ENCODE measurements at regions of chr10 and their contacts with region 1.

Region 1: GRCh38 chr10:95864906-95865813 is 42.6 kb upstream of the CC2D2B start:
- DNase-seq: peak; percentile 33
- H3K4me3 ChIP-seq: no peak overlapping the region
- CTCF ChIP-seq: peak; percentile 71

Region 2: GRCh38 chr10:95755511-95756004 is 109.6 kb before region 1 on chr10:
- CTCF ChIA-PET with region 1: interaction called, 13 read pairs
- POLR2A ChIA-PET with region 1: no interaction called
- DNase-seq: no peak
- H3K4me3 ChIP-seq: no peak overlapping the region
- CTCF ChIP-seq: no peak

Region 3: GRCh38 chr10:95783741-95784140 is 81.4 kb before region 1 on chr10:
- CTCF ChIA-PET with region 1: no interaction called
- POLR2A ChIA-PET with region 1: no interaction called
- DNase-seq: no peak
- H3K4me3 ChIP-seq: no peak overlapping the region
- CTCF ChIP-seq: no peak

Region 4: DNA sequence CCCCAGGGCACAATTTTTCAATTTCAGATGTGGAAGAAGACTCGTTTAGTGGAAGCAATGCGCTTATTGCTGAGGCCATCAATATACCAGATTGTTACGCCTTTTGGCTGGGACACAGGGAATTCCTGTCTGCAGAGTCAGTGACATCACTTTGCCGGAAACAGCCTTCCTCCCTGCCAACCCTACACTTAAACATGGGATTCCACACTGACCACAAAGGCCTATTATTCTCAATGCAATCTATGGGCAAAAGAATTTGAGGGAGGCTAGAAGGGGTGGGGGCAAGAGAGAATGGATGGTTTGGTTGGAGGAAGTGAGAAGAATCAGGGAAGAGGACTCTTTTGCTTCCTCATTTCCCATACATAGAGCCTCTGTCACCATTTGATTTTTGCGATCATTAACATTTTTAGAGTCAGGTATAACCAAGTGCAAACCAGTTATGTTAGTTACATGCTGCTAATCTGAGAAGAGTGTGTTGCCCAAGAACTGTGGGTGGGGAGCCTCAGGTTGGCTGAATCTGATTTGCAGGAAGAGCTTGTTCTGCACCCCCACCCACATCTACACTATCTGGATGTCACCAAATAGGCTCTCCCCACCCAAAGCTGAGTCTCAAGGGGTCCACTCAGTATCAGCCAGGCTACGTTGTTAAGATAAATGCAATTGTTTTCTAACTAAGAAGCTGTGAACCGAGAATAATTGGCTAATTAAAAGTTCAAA is 51.0 kb before region 1 on chr10:
- CTCF ChIA-PET with region 1: no interaction called
- POLR2A ChIA-PET with region 1: no interaction called
- DNase-seq: peak; percentile 75
- H3K4me3 ChIP-seq: no peak overlapping the region
- CTCF ChIP-seq: no peak

Measured in AG04449 (cell line).